Calu3 (cell line): ENCODE measurements at regions of chr12 and their contacts with region 1.

Region 1: DNA sequence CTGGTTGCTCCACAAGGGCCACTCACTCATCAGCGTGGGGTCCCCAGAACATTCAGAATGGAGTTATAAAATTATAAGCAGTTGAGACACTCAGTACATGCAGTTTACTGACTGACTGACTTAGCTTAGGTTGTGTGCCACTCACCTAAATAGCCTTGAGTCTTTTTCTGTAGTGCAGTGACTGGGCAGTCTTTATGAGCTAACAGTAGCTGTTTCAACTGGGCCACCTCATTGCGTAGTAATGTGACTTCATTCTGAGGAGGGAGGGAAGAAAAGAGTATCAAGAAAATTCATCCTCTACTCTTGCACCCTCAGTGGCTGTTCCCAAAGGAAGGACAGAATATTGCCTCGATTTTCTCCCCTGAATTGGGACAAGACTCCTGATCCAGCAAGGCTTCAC is 15.8 kb upstream of the NPFF start:
- DNase-seq: no peak
- H3K4me3 Mint-ChIP-seq: no peak overlapping the region
- H3K27ac Mint-ChIP-seq: no peak overlapping the region
- H3K4me1 Mint-ChIP-seq: no peaks in the 10 kb centered on the region
- H3K27me3 Mint-ChIP-seq: no peaks in the 10 kb centered on the region
- CTCF ChIP-seq: no peak

Region 2: GRCh38 chr12:53065975-53066931 is 456.9 kb before region 1 on chr12:
- CTCF ChIA-PET with region 1: no interaction called
- intact Hi-C with region 1: no loop called
- DNase-seq: peak; percentile 75
- H3K4me3 Mint-ChIP-seq: no peak overlapping the region
- H3K27ac Mint-ChIP-seq: peak overlapping the region; percentile 54
- H3K4me1 Mint-ChIP-seq: peaks cover 20% of the 10 kb centered on the region
- H3K27me3 Mint-ChIP-seq: no peaks in the 10 kb centered on the region
- CTCF ChIP-seq: peak; percentile 77

Region 3: GRCh38 chr12:53120685-53121525 is 402.2 kb before region 1 on chr12:
- CTCF ChIA-PET with region 1: interaction called, 12 read pairs
- intact Hi-C with region 1: no loop called
- DNase-seq: no peak
- H3K4me3 Mint-ChIP-seq: no peak overlapping the region
- H3K27ac Mint-ChIP-seq: no peak overlapping the region
- H3K4me1 Mint-ChIP-seq: no peaks in the 10 kb centered on the region
- H3K27me3 Mint-ChIP-seq: peaks cover 29% of the 10 kb centered on the region
- CTCF ChIP-seq: no peak

Region 4: GRCh38 chr12:53251477-53252348 is 271.4 kb before region 1 on chr12:
- CTCF ChIA-PET with region 1: no interaction called
- intact Hi-C with region 1: no loop called
- DNase-seq: peak; percentile 67
- H3K4me3 Mint-ChIP-seq: peak overlapping the region; percentile 85
- H3K27ac Mint-ChIP-seq: peak overlapping the region; percentile 85
- H3K4me1 Mint-ChIP-seq: peaks cover 27% of the 10 kb centered on the region
- H3K27me3 Mint-ChIP-seq: no peaks in the 10 kb centered on the region
- CTCF ChIP-seq: peak; percentile 39